ENCODE measurements at regions of chr12 and their contacts with region 1.

Region 1: DNA sequence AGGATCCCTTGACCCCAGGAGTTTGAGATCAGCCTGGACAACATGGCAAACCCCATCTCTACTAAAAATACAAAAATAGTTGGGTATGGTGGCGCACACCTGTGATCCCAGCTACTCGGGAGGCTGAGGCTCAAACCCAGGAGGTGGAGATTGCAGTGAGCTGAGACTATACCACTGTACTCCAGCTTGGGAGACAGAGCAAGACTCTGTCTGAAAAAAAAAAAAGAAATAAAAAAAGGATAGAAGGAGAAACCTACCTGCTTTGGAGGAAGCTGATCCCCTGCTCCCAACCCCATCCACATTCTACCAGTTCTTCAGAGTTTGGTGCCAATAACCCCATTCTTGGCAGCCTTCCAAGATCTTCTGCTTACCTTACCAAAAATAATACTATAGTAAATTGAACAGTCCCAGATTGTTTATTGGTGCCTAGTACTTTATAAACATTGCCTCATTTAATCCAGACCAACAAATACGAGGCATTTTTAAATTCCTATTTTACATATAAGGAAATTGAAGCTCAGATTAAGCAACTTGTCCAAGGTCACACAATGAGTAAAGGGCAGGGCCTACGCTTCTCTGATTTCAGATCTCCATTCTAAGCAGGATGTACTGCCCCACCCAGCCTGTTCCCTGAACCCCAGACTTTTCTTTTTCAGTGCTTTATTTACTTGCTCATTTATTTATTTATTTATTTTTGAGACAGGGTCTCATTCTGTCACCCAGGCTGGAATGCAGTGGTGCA is 33.2 kb upstream of the FAM222A start:
- DNase-seq: no peak

Region 2: DNA sequence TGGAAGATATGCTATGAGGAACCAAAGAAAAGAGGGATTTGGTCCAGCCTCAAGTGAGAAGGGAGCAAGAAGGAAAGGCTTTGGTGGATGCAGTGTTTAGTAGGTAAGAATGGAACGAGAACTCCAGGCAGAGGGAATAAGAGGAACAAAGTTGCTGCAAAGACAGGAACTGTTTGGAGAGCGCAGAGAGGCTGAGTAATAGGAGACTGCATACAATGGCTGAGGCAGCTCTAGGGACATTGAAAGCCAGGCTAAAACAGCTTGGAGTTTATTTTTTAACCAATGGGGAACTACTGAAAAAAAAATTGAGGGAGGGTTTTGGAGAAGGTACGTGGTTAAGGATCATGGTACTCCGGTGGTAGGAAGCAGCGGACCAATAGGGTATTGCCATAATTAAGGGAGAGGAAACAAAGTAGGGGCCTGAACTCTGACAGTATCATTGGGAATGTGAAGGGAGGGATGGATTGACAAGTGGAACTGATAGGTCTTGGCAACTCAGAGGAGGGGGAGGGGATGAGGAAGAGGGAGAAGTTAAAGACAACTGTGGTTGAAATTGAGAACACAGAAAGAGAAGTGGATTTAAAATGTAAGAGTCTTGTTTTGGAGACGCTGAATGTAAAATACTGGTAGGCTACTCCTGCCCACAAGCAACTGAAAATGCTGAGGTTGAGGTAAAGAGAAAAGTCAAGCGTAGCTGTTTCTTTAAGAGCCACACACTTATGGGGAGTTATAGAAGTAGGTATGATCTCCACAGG is 1901.2 kb before region 1 on chr12:
- intact Hi-C with region 1: loop called in 1 of 2 experiments (anchors 10 kb)
- DNase-seq: no peak

Region 3: GRCh38 chr12:109255377-109255776 is 425.1 kb before region 1 on chr12:
- intact Hi-C with region 1: no loop called
- DNase-seq: no peak

Region 4: DNA sequence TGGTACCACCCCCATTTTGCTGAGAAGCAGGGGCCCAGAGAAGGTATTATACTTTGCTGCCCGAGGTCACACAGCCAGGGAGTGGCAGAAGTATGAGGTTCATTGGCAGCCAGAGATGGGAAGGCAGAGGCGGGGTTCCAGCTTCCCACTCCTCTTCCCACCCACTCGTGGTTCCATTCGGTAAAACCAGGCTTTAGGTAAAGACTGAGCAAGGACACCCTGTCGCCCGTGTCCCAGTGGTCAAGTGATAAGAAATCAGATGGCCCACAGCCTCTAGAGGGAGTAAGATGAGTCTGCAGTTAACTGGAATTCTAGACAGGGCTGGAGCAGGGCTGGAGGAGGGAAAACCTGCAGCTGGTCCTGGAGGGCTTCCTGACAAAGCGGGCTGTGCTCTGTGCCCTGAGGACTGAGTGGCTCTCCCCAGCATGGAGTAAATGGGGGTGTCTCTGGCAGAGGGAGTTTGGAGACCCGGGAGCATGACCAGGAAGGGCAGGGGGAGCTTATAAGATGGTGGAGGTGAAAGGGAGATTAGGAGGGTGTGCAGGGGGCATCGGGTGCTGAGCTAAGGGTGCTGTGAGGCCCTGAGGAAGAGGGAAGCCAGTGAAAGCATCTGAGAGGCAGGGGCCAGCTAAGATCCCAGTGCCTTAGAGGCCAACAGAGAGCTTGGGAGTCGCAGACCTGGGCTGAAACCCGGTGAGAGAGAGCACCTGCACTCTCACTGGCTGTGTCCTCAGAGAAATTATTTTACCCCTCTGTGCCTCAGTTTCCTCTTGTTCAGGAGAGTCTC is 39.0 kb after region 1 on chr12:
- intact Hi-C with region 1: no loop called
- DNase-seq: no peak

Region 5: GRCh38 chr12:109833307-109834189 is 153.1 kb after region 1 on chr12 and contains the start of gene TRPV4:
- intact Hi-C with region 1: no loop called
- DNase-seq: no peak
- total RNA-seq, gene TRPV4: 1.1 to 2.0 TPM

Measured in posterior vena cava (tissue), 2 donors.